ENCODE measurements at regions of chr12 and their contacts with region 1.

Region 1: GRCh38 chr12:6752921-6753771 is at the start of gene MLF2:
- DNase-seq: peak; percentile 99
- ATAC-seq: peak; percentile 95
- H3K4me3 Mint-ChIP-seq: peak within 1 kb of the TSS; percentile 92
- H3K27ac Mint-ChIP-seq: peak within 1 kb of the TSS; percentile 99
- H3K4me1 Mint-ChIP-seq: peaks cover 25% of the 10 kb centered on the region
- H3K27me3 Mint-ChIP-seq: no peaks in the 10 kb centered on the region
- CTCF ChIP-seq: peak; percentile 89; the same call in 1 of the 2 replicates
- total RNA-seq, gene MLF2: 226 to 236 TPM (median 229 TPM) in 3 replicates

Region 2: GRCh38 chr12:6723607-6724396 is 29.3 kb before region 1 on chr12 and contains the start of gene COPS7A:
- CTCF ChIA-PET with region 1: interaction called, 24 read pairs
- POLR2A ChIA-PET with region 1: interaction called, 37 read pairs
- DNase-seq: peak; percentile 98
- ATAC-seq: peak; percentile 98
- H3K4me3 Mint-ChIP-seq: peak within 1 kb of the TSS; percentile 88
- H3K27ac Mint-ChIP-seq: peak within 1 kb of the TSS; percentile 98
- H3K4me1 Mint-ChIP-seq: peaks cover 11% of the 10 kb centered on the region
- H3K27me3 Mint-ChIP-seq: peaks cover 16% of the 10 kb centered on the region
- CTCF ChIP-seq: no peak
- total RNA-seq, gene COPS7A: 41.2 to 43.8 TPM (median 41.4 TPM) in 3 replicates

Region 3: GRCh38 chr12:6773590-6774351 is 20.6 kb after region 1 on chr12:
- CTCF ChIA-PET with region 1: interaction called, 234 read pairs
- POLR2A ChIA-PET with region 1: interaction called, 84 read pairs
- DNase-seq: peak; percentile 42
- ATAC-seq: peak; percentile 12
- H3K4me3 Mint-ChIP-seq: peak overlapping the region; percentile 68
- H3K27ac Mint-ChIP-seq: no peak overlapping the region
- H3K4me1 Mint-ChIP-seq: peaks cover 63% of the 10 kb centered on the region
- H3K27me3 Mint-ChIP-seq: peaks cover 65% of the 10 kb centered on the region
- CTCF ChIP-seq: no peak

Region 4: GRCh38 chr12:6825398-6826124 is 72.4 kb after region 1 on chr12:
- CTCF ChIA-PET with region 1: interaction called, 112 read pairs
- POLR2A ChIA-PET with region 1: interaction called, 7 read pairs
- DNase-seq: peak; percentile 95
- ATAC-seq: peak; percentile 35
- H3K4me3 Mint-ChIP-seq: peak overlapping the region; percentile 78
- H3K27ac Mint-ChIP-seq: no peak overlapping the region
- H3K4me1 Mint-ChIP-seq: peaks cover 60% of the 10 kb centered on the region
- H3K27me3 Mint-ChIP-seq: peaks cover 45% of the 10 kb centered on the region
- CTCF ChIP-seq: peak; percentile 90

Region 5: DNA sequence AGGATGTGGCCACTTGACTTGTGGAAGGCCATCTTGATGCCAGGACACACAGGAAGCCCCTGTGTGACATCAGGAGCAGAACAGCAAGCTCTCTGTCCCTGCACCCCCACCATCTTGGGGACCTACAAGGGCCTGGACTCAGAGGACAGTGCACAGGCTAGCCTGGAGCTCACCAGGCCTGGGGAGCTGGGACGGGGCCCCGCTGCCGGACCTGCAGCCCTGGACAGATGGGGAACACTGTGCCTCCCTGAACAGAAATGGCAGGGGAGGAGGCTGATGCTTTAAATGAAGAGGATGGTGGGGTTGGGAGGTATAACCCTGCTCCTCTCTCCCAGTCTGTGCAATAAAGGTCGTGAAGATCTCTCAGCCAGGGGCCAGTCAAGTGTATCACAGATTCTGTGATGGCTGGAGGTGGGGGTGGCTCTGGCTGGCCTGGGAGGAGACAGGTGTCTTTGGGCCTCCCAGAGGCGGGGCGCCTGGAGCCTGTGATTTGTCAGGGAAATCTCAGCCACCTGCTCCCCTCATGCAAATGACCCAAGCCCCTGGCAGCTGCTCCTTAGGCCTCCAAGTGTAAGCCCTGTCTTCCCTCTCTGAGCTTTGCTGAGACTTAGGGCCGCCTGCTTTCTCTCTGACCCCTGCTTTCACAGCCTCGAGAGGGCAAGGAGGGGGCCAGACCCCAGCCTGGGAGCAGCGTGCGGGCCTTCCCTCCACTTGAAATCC is 86.5 kb after region 1 on chr12:
- CTCF ChIA-PET with region 1: interaction called, 46 read pairs
- POLR2A ChIA-PET with region 1: interaction called, 3 read pairs
- DNase-seq: peak; percentile 73
- ATAC-seq: peak; percentile 73
- H3K4me3 Mint-ChIP-seq: no peak overlapping the region
- H3K27ac Mint-ChIP-seq: no peak overlapping the region; the same call in 1 of the 2 replicates
- H3K4me1 Mint-ChIP-seq: peaks cover 18% of the 10 kb centered on the region
- H3K27me3 Mint-ChIP-seq: no peaks in the 10 kb centered on the region
- CTCF ChIP-seq: no peak

Region 6: GRCh38 chr12:7197841-7198240 is 444.7 kb after region 1 on chr12:
- CTCF ChIA-PET with region 1: no interaction called
- POLR2A ChIA-PET with region 1: no interaction called
- DNase-seq: no peak
- ATAC-seq: no peak
- H3K4me3 Mint-ChIP-seq: no peak overlapping the region
- H3K27ac Mint-ChIP-seq: no peak overlapping the region
- H3K4me1 Mint-ChIP-seq: no peaks in the 10 kb centered on the region
- H3K27me3 Mint-ChIP-seq: no peaks in the 10 kb centered on the region
- CTCF ChIP-seq: no peak